Dorsolateral prefrontal cortex (tissue), 120 donors: ENCODE measurements at regions of chr5 and their contacts with region 1.

Region 1: DNA sequence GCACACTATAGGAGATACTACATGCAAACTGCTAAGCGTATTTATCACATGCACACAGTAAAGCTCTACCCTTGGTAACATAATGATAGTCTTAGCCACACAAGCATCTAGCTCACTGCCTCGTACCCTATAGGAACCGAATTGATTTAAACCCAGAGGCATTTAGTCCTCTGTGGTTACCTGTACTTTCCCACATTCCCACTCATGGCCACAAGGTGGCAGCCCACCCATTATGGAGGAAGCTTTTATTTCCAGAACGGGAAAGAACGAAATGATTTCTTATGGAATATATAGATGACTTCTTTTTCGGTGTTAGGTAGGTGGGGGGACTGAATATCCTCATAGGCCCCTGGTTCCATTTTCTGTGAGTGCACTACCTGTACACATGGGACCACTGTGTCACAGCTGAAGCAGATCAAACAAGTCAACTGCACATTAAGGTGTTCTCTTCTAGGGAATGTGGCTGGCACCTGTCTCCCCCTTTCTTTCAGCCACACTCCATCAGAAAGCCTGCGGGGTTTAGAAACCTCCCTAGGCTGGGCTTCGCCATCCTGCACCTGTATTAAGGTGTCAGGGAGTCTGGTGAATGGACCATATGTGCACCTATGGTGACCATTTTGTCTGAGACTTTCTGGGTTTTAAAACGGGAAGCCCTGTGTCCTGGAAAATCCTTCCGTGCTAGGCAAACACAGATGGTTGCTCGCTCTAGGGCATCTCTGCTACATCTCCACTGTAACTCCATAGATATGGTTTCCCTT is 313.2 kb downstream of the SLIT3 start:
- DNase-seq: peak; percentile 68 to 87 (median 80)
- H3K4me3 ChIP-seq: peak overlapping the region in 42 of 59 donors; percentile 2 to 47 (median 34)
- H3K27ac ChIP-seq: peak overlapping the region in 2 of 59 donors; percentile 42 to 54
- H3K27me3 ChIP-seq: peaks cover 0 to 4% (median 0%) of the 10 kb centered on the region in 45 donors
- CTCF ChIP-seq: peak; percentile 84 to 98 (median 94)

Region 2: GRCh38 chr5:168950241-168950951 is 37.3 kb before region 1 on chr5:
- intact Hi-C with region 1: no loop called
- DNase-seq: no peak
- H3K4me3 ChIP-seq: no peak overlapping the region
- H3K27ac ChIP-seq: no peak overlapping the region
- H3K27me3 ChIP-seq: no peaks in the 10 kb centered on the region
- CTCF ChIP-seq: no peak

Region 3: GRCh38 chr5:169149317-169149716 is 161.6 kb after region 1 on chr5:
- intact Hi-C with region 1: loop called in 1 of 2 experiments (anchors 5 kb)
- DNase-seq: no peak
- H3K4me3 ChIP-seq: no peak overlapping the region
- H3K27ac ChIP-seq: no peak overlapping the region
- H3K27me3 ChIP-seq: no peaks in the 10 kb centered on the region
- CTCF ChIP-seq: peak in 43 of 56 donors; percentile 9 to 55 (median 31)

Region 4: DNA sequence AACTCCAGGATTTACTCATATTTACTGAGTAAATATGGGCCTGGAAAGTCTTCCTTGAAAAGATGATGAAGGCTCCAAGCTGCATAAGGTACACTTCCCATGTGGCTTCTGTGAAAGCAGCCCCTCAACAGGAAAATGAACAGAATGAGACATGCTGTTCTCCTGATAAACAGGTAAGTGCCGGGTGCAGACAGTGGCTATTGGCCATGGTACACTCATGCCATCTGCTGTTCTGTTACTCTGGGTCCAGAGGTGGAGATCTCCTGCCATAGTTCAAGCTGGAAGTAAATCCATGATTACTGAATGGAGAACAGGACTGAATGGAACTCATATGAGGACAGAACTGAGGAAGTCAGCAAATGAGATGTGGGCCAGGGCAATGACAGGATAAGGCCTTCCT is 209.6 kb after region 1 on chr5:
- intact Hi-C with region 1: loop called in 1 of 2 experiments (anchors 5 kb)
- DNase-seq: peak in 3 of 10 donors; percentile 41 to 52 (median 52)
- H3K4me3 ChIP-seq: no peak overlapping the region
- H3K27ac ChIP-seq: no peak overlapping the region
- H3K27me3 ChIP-seq: no peaks in the 10 kb centered on the region
- CTCF ChIP-seq: peak in 24 of 56 donors; percentile 5 to 67 (median 28)

Region 5: GRCh38 chr5:169302491-169303118 is 314.9 kb after region 1 on chr5:
- intact Hi-C with region 1: loop called (anchors 2 to 5 kb)
- DNase-seq: peak; percentile 62 to 88 (median 78)
- H3K4me3 ChIP-seq: peak overlapping the region in 13 of 59 donors; percentile 2 to 67 (median 17)
- H3K27ac ChIP-seq: no peak overlapping the region
- H3K27me3 ChIP-seq: peaks cover 0 to 68% (median 34%) of the 10 kb centered on the region in 45 donors
- CTCF ChIP-seq: peak; percentile 68 to 97 (median 92)

Region 6: DNA sequence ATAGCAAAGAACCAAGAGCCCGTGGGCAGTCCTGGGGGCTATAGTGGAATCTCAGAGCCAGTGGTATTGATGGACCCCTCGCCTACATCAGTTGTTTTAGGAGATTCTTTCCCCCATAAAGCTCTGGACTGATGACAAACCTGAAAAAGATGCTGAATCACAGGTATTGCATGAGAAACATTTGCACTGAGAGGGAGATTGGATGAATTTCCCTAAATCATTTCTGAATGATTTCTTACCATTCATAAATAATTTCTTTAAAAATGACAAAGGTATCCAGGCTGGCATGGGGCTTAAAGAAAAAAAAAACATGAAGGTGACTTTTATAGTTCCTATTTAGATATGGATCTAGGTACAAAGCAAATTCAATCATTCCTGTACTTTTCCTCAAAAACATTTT is 367.2 kb after region 1 on chr5:
- intact Hi-C with region 1: no loop called
- DNase-seq: no peak
- H3K4me3 ChIP-seq: no peak overlapping the region
- H3K27ac ChIP-seq: no peak overlapping the region
- H3K27me3 ChIP-seq: peaks cover 0 to 21% (median 0%) of the 10 kb centered on the region in 45 donors
- CTCF ChIP-seq: no peak

Region 7: DNA sequence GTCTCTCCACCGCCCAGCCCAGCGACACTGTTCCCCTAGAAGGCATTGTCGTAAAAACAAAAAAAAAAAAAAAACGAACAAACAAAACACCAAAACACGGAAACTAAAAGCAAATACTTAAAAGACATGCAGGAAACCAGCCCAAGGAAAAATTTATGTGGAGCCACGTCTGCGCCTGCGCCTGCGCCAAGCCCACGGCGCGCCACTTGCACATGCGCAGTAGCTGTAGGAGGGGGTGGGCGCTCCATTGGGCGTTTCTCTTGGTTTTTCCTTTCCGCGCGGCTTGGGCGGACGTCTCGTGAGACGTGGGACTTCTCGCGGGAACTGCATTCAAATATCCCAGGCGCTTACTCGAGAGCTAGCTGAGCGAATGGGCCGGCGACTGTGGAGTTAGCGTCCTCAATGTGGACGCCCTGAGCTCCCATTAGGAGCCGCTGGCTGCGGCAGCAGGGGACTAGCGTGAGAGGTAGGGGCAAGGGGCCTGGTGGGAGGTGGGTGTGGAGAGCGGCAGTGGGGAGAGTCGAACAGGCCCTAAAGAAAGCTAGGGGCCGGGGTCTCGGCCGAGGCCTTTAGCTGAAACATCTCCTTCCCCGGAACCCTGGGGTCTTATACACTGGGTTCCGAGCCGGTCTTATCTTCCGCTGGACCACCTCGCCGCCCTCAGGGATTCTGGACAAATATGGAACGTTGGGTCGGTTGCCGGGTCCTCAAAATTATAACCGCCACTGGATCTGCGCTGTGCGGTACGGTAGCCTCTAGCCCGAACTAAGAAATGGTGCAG is 595.9 kb after region 1 on chr5 and contains the start of gene SPDL1:
- intact Hi-C with region 1: loop called (anchors 5 to 10 kb)
- DNase-seq: peak; percentile 85 to 97 (median 93)
- H3K4me3 ChIP-seq: peak within 1 kb of the TSS; percentile 58 to 97 (median 87)
- H3K27ac ChIP-seq: peak within 1 kb of the TSS in 52 of 59 donors; percentile 2 to 89 (median 70)
- H3K27me3 ChIP-seq: no peaks in the 10 kb centered on the region
- CTCF ChIP-seq: peak in 41 of 56 donors; percentile 7 to 68 (median 36)
- total RNA-seq, gene SPDL1: 6.4 to 23.1 (median 14.0) TPM